B cell (primary cell): ENCODE measurements at regions of chr7 and their contacts with region 1.

Region 1: DNA sequence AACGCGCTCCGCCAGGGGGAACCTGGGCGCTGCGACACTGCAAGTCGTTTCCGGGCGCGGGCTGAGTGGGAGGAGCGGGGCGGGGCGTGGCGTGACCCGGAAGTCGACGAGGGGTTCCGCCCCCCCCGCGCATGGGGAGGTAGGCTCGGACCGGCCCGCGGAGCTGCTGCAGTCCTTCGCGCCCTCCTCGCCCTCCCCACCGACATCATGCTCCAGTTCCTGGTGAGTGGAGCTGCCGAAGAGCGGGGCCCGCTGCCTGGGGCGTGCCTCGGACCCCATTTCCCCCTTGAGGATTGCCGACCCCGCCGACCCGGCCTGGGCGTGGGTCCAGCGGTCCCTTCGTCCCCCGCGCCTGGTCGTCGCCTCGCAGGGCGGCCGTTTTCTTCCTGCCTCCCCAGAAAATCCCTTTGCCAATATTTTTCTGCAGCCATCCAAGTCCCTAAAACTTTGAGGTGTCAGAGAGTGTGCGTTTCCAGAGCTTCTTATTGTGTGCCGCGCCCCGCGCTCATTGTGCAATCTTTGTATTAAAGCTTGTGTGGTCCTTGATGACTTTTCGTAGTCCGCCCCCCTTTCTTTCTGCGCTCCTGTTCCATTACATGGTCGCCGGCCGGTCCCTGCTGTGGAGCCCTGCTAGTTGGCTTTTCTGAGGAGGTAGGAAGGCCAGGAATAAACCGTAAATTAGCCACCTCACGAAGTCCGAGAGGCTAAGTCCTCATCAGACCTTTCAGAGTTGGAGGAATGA is at the start of gene STMP1:
- DNase-seq: peak; percentile 95
- ATAC-seq: peak; percentile 99
- H3K4me3 ChIP-seq: peak within 1 kb of the TSS; percentile 88 to 99 (median 97)
- H3K4me3 Mint-ChIP-seq: peak within 1 kb of the TSS; percentile 91
- H3K27ac ChIP-seq: peak within 1 kb of the TSS; percentile 56 to 77
- H3K27ac Mint-ChIP-seq: peak within 1 kb of the TSS; percentile 81
- H3K4me1 ChIP-seq: peaks cover 15 to 32% of the 10 kb centered on the region in 2 donors
- H3K4me1 Mint-ChIP-seq: peaks cover 32% of the 10 kb centered on the region
- H3K27me3 ChIP-seq: no peaks in the 10 kb centered on the region
- H3K27me3 Mint-ChIP-seq: no peaks in the 10 kb centered on the region
- CTCF ChIP-seq: peak; percentile 75
- total RNA-seq, gene STMP1: 30.3 and 33.5 TPM in 2 replicates

Region 2: DNA sequence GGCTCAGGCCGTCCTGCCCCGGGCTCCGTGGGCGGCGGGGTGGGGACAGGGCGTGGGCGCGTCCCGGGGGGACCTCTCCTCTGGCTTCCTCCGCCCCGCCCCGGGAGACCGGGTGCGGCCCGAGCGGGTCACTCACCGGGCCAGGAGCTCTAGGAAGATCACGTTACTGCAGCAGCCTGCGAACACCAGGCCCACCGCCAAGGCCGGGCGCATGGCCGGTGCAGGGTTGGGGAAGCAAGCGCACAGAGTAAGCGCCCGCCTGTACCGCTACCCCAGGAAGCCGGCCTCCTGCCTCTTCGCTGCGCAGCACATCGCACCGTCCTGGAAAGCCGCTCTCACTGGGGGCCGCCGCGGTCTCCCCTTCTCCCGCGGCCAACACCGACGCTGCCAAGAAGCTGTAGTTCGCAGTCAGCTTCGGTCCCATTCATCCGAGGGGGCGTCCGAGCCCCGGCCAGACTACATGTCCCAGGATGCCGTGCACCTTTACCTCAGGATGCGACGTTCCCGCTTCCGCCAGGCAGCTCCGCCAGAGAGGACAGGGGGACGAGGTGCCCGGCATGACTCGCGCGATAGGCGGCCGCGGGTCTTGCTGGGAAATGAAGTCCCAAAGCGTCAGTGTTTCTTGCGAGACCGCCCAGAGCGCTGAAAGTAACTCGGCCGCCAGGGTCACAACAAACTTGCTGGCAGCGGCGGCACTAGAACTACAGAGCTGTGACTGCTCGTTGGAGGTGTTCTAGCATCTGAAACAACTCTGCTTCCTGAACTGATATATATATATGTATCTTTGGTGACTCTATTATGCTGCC is 1345.8 kb before region 1 on chr7 and contains the start of gene SLC35B4:
- CTCF ChIA-PET with region 1: no interaction called
- POLR2A ChIA-PET with region 1: no interaction called
- intact Hi-C with region 1: loop called (anchors 2 kb)
- DNase-seq: peak; percentile 94
- ATAC-seq: peak; percentile 98
- H3K4me3 ChIP-seq: peak within 1 kb of the TSS; percentile 52 to 95 (median 84)
- H3K4me3 Mint-ChIP-seq: peak within 1 kb of the TSS; percentile 95
- H3K27ac ChIP-seq: peak within 1 kb of the TSS; percentile 46 to 68
- H3K27ac Mint-ChIP-seq: peak within 1 kb of the TSS; percentile 85
- H3K4me1 ChIP-seq: peaks cover 10 to 14% of the 10 kb centered on the region in 2 donors
- H3K4me1 Mint-ChIP-seq: peaks cover 18% of the 10 kb centered on the region
- H3K27me3 ChIP-seq: no peaks in the 10 kb centered on the region
- H3K27me3 Mint-ChIP-seq: no peaks in the 10 kb centered on the region
- CTCF ChIP-seq: peak; percentile 41
- total RNA-seq, gene SLC35B4: 8.0 and 14.8 TPM in 2 replicates

Region 3: DNA sequence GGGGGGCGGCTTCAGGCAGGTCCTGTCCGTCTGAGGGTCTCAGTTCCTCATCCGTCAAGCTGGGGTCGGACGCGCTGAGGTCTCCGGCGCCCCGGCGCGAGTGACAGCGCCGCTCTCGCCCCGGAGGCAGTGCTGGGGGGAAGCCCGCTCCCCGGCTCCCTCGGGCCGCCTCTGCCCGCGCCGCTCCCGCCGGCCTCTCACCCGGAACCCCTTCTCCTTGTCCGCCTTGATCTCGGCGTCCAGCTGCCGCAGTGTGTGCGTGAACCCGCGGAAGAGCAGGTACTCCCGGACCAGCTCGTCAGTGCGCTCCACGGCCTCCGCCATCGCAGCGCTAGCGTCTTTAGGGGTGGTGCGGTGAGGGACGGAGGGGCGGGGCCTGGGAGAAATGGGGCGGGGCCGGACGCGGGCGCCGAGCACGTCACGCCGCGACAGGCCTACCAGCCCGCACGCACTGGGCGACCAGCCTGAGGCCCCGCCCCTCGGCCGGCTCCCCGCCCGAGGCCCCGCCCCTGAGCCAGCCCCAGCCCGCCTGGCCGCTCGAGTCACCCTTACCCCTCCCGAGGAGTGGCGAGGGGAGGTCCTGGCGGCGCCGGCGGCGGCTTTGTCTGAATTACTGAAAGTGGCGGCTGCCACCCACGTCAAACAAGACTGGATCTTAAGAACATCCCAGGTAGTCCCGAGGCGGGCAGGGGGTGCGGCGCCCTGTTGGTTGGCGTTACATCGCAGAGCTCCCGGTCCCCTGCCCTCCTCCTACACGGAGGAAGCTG is 451.2 kb before region 1 on chr7 and contains the start of gene WDR91:
- CTCF ChIA-PET with region 1: interaction called, 3 read pairs
- POLR2A ChIA-PET with region 1: no interaction called
- intact Hi-C with region 1: loop called (anchors 2 kb)
- DNase-seq: peak; percentile 95
- ATAC-seq: peak; percentile 94
- H3K4me3 ChIP-seq: peak within 1 kb of the TSS; percentile 82 to 98 (median 88)
- H3K4me3 Mint-ChIP-seq: peak within 1 kb of the TSS; percentile 98
- H3K27ac ChIP-seq: peak within 1 kb of the TSS; percentile 77 to 92
- H3K27ac Mint-ChIP-seq: peak within 1 kb of the TSS; percentile 97
- H3K4me1 ChIP-seq: peaks cover 34 to 35% of the 10 kb centered on the region in 2 donors
- H3K4me1 Mint-ChIP-seq: peaks cover 48% of the 10 kb centered on the region
- H3K27me3 ChIP-seq: no peaks in the 10 kb centered on the region
- H3K27me3 Mint-ChIP-seq: no peaks in the 10 kb centered on the region
- CTCF ChIP-seq: no peak
- total RNA-seq, gene WDR91: 40.7 and 47.0 TPM in 2 replicates

Region 4: DNA sequence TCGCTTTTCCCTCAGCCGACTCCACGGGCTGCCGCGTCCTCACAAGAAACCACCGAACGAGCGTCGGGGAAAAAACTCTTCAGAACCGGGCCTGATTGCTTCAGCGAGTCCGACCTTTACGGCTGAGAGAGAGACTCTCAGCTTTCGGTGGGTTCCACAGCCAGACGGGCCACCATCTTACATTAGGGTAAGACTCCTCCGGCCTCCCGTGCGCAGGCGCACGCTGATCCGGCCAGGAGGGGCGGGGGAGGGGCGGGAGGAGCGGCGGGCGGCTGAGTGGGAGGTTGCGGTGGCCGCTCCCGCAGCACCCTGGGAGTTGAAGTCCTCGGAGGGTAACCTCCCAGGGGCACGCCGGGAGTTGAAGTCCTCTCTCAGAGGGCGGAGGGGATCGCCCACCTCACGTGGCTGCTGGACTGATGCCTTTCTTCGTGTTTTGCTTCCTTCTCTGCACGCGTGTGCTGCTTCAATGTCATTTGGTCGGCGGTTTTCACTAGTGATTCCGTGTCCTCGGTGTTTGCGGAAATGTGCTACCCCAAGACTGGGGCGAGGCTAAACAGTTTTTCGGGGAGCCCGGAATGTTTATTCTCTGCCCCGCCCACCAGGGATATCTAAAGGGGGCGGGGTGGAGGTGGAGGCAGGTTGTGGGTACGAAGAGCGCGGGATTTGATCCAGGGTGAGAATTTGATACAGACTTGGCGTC is 152.5 kb before region 1 on chr7 and contains the start of gene CNOT4:
- CTCF ChIA-PET with region 1: interaction called, 4 read pairs
- POLR2A ChIA-PET with region 1: no interaction called
- intact Hi-C with region 1: loop called (anchors 1 kb)
- DNase-seq: peak; percentile 97
- ATAC-seq: peak; percentile 95
- H3K4me3 ChIP-seq: peak within 1 kb of the TSS; percentile 79 to 96 (median 89)
- H3K4me3 Mint-ChIP-seq: no peak within 1 kb of the TSS
- H3K27ac ChIP-seq: peak within 1 kb of the TSS; percentile 92 to 96
- H3K27ac Mint-ChIP-seq: no peak within 1 kb of the TSS
- H3K4me1 ChIP-seq: peaks cover 17 to 24% of the 10 kb centered on the region in 2 donors
- H3K4me1 Mint-ChIP-seq: peaks cover 10% of the 10 kb centered on the region
- H3K27me3 ChIP-seq: no peaks in the 10 kb centered on the region
- H3K27me3 Mint-ChIP-seq: no peaks in the 10 kb centered on the region
- CTCF ChIP-seq: no peak
- total RNA-seq, gene CNOT4: 52.1 and 55.1 TPM in 2 replicates

Region 5: GRCh38 chr7:135645296-135645904 is 17.1 kb before region 1 on chr7:
- CTCF ChIA-PET with region 1: interaction called, 46 read pairs
- POLR2A ChIA-PET with region 1: no interaction called
- intact Hi-C with region 1: no loop called
- DNase-seq: peak; percentile 56
- ATAC-seq: peak; percentile 70
- H3K4me3 ChIP-seq: no peak overlapping the region
- H3K4me3 Mint-ChIP-seq: no peak overlapping the region
- H3K27ac ChIP-seq: no peak overlapping the region
- H3K27ac Mint-ChIP-seq: no peak overlapping the region
- H3K4me1 ChIP-seq: no peaks in the 10 kb centered on the region
- H3K4me1 Mint-ChIP-seq: no peaks in the 10 kb centered on the region
- H3K27me3 ChIP-seq: no peaks in the 10 kb centered on the region
- H3K27me3 Mint-ChIP-seq: no peaks in the 10 kb centered on the region
- CTCF ChIP-seq: peak; percentile 82

Region 6: DNA sequence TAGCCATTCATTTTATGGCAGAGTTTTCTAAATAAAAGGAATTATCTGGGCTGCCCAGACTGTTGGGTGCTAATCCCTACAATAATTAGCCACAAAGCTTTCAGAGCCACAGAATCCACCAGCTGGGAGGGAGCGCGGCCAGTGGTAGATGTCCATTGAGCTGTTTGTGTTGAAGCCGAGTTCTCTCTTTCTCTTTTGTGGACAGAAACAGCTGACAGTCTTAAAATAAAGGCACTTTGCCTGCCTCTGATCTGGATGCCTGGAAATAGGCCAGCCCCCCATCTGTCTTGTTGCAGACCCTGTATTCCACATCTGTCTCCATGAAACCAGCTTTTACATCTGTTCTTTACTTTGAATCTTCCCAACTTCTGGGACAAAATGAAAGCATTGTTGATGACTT is 248.6 kb after region 1 on chr7:
- CTCF ChIA-PET with region 1: no interaction called
- POLR2A ChIA-PET with region 1: no interaction called
- intact Hi-C with region 1: no loop called
- DNase-seq: no peak
- ATAC-seq: no peak
- H3K4me3 ChIP-seq: no peak overlapping the region
- H3K4me3 Mint-ChIP-seq: no peak overlapping the region
- H3K27ac ChIP-seq: no peak overlapping the region
- H3K27ac Mint-ChIP-seq: no peak overlapping the region
- H3K4me1 ChIP-seq: no peaks in the 10 kb centered on the region
- H3K4me1 Mint-ChIP-seq: no peaks in the 10 kb centered on the region
- H3K27me3 ChIP-seq: no peaks in the 10 kb centered on the region
- H3K27me3 Mint-ChIP-seq: no peaks in the 10 kb centered on the region
- CTCF ChIP-seq: no peak

Region 7: GRCh38 chr7:135977007-135977741 is 314.6 kb after region 1 on chr7 and contains the start of gene MTPN:
- CTCF ChIA-PET with region 1: no interaction called
- POLR2A ChIA-PET with region 1: no interaction called
- intact Hi-C with region 1: loop called (anchors 1 kb)
- DNase-seq: peak; percentile 97
- ATAC-seq: peak; percentile 75
- H3K4me3 ChIP-seq: peak within 1 kb of the TSS; percentile 75 to 91 (median 89)
- H3K4me3 Mint-ChIP-seq: peak within 1 kb of the TSS; percentile 89
- H3K27ac ChIP-seq: peak within 1 kb of the TSS; percentile 92 to 94
- H3K27ac Mint-ChIP-seq: peak within 1 kb of the TSS; percentile 95
- H3K4me1 ChIP-seq: peaks cover 64 to 71% of the 10 kb centered on the region in 2 donors
- H3K4me1 Mint-ChIP-seq: peaks cover 86% of the 10 kb centered on the region
- H3K27me3 ChIP-seq: no peaks in the 10 kb centered on the region
- H3K27me3 Mint-ChIP-seq: no peaks in the 10 kb centered on the region
- CTCF ChIP-seq: no peak
- total RNA-seq, gene MTPN: 114 and 115 TPM in 2 replicates